ENCODE measurements at regions of chr14 and their contacts with region 1.

Region 1: DNA sequence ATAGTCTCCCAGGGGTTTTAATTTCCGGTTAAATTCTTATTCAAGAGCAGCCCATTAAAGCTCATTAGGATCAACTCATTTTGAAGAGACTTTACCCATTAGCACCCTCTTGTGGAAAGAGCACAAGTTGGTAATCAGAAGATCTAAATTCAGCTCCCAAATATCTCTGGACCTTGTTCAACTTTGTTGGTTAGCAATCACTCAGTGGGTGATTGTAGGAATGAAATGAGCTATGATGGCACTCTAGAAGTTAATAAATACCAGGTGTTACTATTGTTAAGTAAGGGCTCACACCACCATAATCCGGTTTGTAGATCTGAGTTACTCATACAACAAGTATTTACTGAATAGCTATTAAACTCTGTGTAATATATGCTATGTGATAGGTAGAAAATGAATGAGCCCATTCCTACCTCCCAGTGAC is 42.9 kb downstream of the TRIP11 start:
- DNase-seq: peak; percentile 85
- H3K4me3 ChIP-seq: no peak overlapping the region
- H3K27ac ChIP-seq: peak overlapping the region; percentile 45
- H3K4me1 ChIP-seq: peaks cover 44% of the 10 kb centered on the region
- H3K27me3 ChIP-seq: no peaks in the 10 kb centered on the region
- CTCF ChIP-seq: peak; percentile 39 to 48
- POLR2A ChIP-seq: no peak

Region 2: GRCh38 chr14:91510174-91511042 is 486.6 kb before region 1 on chr14 and contains the start of gene PPP4R3A:
- CTCF ChIA-PET with region 1: no interaction called
- POLR2A ChIA-PET with region 1: no interaction called
- dilution Hi-C with region 1: no loop called
- intact Hi-C with region 1: loop called (anchors 5 kb)
- DNase-seq: peak; percentile 96
- H3K4me3 ChIP-seq: peak within 1 kb of the TSS; percentile 56 to 97 (median 85)
- H3K27ac ChIP-seq: peak within 1 kb of the TSS; percentile 83
- H3K4me1 ChIP-seq: peaks cover 17% of the 10 kb centered on the region
- H3K27me3 ChIP-seq: no peaks in the 10 kb centered on the region
- CTCF ChIP-seq: no peak
- POLR2A ChIP-seq: peak; percentile 89
- total RNA-seq, gene PPP4R3A: 77.0 and 83.5 TPM in 2 replicates

Region 3: GRCh38 chr14:91858215-91858905 is 138.6 kb before region 1 on chr14:
- CTCF ChIA-PET with region 1: interaction called, 10 read pairs
- POLR2A ChIA-PET with region 1: no interaction called
- dilution Hi-C with region 1: no loop called
- intact Hi-C with region 1: no loop called
- DNase-seq: peak; percentile 28
- H3K4me3 ChIP-seq: no peak overlapping the region
- H3K27ac ChIP-seq: no peak overlapping the region
- H3K4me1 ChIP-seq: no peaks in the 10 kb centered on the region
- H3K27me3 ChIP-seq: peaks cover 0 to 1% of the 10 kb centered on the region in 2 experiments
- CTCF ChIP-seq: no peak
- POLR2A ChIP-seq: no peak

Region 4: GRCh38 chr14:91947471-91948184 is 49.3 kb before region 1 on chr14 and contains the start of gene FBLN5:
- CTCF ChIA-PET with region 1: interaction called, 51 read pairs
- POLR2A ChIA-PET with region 1: no interaction called
- dilution Hi-C with region 1: no loop called
- intact Hi-C with region 1: loop called (anchors 1 kb)
- DNase-seq: peak; percentile 24
- H3K4me3 ChIP-seq: peak within 1 kb of the TSS; percentile 2 to 55 (median 48)
- H3K27ac ChIP-seq: no peak within 1 kb of the TSS
- H3K4me1 ChIP-seq: peaks cover 4% of the 10 kb centered on the region
- H3K27me3 ChIP-seq: peaks cover 0 to 17% of the 10 kb centered on the region in 2 experiments
- CTCF ChIP-seq: no peak
- POLR2A ChIP-seq: peak; percentile 18
- total RNA-seq, gene FBLN5: 27.6 and 44.9 TPM in 2 replicates

Region 5: DNA sequence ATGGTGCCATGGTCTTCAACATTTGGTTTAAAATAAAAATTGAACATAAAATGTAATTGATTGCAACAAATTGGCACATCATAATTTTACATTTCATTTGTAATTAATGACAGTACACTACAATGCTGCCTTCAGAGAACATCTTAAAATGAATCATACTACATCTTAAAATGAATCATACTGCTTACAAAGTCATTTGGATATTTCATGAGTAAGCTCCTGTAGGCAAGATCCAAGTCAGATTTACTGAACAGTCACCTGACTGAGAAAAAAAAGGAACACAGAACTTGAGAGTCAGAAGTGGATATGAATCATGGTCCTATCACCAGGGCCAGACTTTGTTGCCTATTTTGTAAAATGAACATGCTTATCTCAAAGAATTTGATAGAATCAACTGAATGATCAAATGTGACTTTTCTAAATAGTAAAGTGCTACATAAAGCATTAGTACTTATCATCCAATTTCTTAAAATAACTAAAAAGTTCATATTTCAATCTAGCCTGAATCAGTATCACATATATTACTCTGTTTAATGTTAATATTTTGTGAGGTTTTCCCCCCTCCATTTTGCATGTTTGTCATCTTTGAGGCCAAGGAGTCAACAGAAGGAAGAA is 16.7 kb before region 1 on chr14:
- CTCF ChIA-PET with region 1: interaction called, 88 read pairs
- POLR2A ChIA-PET with region 1: no interaction called
- dilution Hi-C with region 1: no loop called
- intact Hi-C with region 1: loop called (anchors 1 kb)
- DNase-seq: peak; percentile 94
- H3K4me3 ChIP-seq: no peak overlapping the region
- H3K27ac ChIP-seq: peak overlapping the region; percentile 71
- H3K4me1 ChIP-seq: peaks cover 34% of the 10 kb centered on the region
- H3K27me3 ChIP-seq: no peaks in the 10 kb centered on the region
- CTCF ChIP-seq: no peak
- POLR2A ChIP-seq: no peak

Region 6: GRCh38 chr14:92039719-92040430 is 42.9 kb after region 1 on chr14 and contains the start of gene TRIP11:
- CTCF ChIA-PET with region 1: interaction called, 20 read pairs
- POLR2A ChIA-PET with region 1: interaction called, 5 read pairs
- dilution Hi-C with region 1: no loop called
- intact Hi-C with region 1: loop called (anchors 2 kb)
- DNase-seq: peak; percentile 94
- H3K4me3 ChIP-seq: peak within 1 kb of the TSS; percentile 67 to 96 (median 73)
- H3K27ac ChIP-seq: peak within 1 kb of the TSS; percentile 92
- H3K4me1 ChIP-seq: peaks cover 16% of the 10 kb centered on the region
- H3K27me3 ChIP-seq: no peaks in the 10 kb centered on the region
- CTCF ChIP-seq: no peak
- POLR2A ChIP-seq: peak; percentile 91
- total RNA-seq, gene TRIP11: 51.7 and 58.0 TPM in 2 replicates

Region 7: GRCh38 chr14:92323011-92323915 is 326.3 kb after region 1 on chr14 and contains the start of gene SLC24A4:
- CTCF ChIA-PET with region 1: no interaction called
- POLR2A ChIA-PET with region 1: no interaction called
- dilution Hi-C with region 1: no loop called
- intact Hi-C with region 1: no loop called
- DNase-seq: no peak
- H3K4me3 ChIP-seq: no peak within 1 kb of the TSS
- H3K27ac ChIP-seq: no peak within 1 kb of the TSS
- H3K4me1 ChIP-seq: no peaks in the 10 kb centered on the region
- H3K27me3 ChIP-seq: peaks cover 40 to 41% of the 10 kb centered on the region in 2 experiments
- CTCF ChIP-seq: no peak
- POLR2A ChIP-seq: no peak
- total RNA-seq, gene SLC24A4: 0.07 and 0.14 TPM in 2 replicates